ENCODE measurements at regions of chr6 and their contacts with region 1.

Region 1: DNA sequence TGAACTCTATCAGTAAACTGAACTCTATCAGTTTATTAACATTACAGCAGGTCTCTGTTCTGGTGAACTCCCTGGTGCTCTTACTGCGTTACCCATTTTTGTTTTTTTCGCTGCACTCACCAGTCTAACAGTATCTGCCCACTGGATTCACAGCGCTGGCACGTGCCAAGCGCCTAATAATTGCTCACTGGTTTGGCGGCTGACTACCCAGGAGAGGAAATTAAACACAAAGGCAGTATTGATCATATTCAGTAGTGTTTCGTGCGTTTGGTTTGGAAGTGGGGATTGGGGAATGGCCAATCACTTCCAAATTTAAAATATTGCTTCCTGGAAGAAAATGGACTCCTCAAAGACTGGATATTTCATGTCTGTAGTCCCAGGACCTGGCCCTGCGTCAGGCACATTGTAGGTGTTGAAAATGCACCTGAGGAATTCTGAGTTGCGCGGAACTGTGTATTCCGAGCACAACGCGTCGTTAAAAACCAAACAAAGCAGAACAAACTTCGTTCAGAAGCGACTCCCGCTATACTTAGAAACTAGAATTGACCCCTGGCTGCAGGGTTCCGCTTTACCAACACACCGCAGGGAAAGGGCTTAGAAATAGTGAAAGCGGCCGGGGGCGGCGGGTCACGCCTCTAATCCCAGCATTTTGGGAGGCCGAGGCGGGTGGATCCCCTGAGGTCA is 1.1 kb upstream of the RPS12 start:
- DNase-seq: peak; percentile 68
- H3K4me3 Mint-ChIP-seq: peak overlapping the region; percentile 97
- H3K27ac Mint-ChIP-seq: peak overlapping the region; percentile 98
- H3K4me1 Mint-ChIP-seq: peaks cover 28% of the 10 kb centered on the region
- H3K27me3 Mint-ChIP-seq: peaks cover 2% of the 10 kb centered on the region

Region 2: GRCh38 chr6:131914967-131915751 is 898.2 kb before region 1 on chr6:
- CTCF ChIA-PET with region 1: no interaction called
- POLR2A ChIA-PET with region 1: no interaction called
- intact Hi-C with region 1: loop called (anchors 5 kb)
- DNase-seq: peak; percentile 61
- H3K4me3 Mint-ChIP-seq: no peak overlapping the region
- H3K27ac Mint-ChIP-seq: no peak overlapping the region
- H3K4me1 Mint-ChIP-seq: peaks cover 13% of the 10 kb centered on the region
- H3K27me3 Mint-ChIP-seq: peaks cover 43% of the 10 kb centered on the region

Region 3: DNA sequence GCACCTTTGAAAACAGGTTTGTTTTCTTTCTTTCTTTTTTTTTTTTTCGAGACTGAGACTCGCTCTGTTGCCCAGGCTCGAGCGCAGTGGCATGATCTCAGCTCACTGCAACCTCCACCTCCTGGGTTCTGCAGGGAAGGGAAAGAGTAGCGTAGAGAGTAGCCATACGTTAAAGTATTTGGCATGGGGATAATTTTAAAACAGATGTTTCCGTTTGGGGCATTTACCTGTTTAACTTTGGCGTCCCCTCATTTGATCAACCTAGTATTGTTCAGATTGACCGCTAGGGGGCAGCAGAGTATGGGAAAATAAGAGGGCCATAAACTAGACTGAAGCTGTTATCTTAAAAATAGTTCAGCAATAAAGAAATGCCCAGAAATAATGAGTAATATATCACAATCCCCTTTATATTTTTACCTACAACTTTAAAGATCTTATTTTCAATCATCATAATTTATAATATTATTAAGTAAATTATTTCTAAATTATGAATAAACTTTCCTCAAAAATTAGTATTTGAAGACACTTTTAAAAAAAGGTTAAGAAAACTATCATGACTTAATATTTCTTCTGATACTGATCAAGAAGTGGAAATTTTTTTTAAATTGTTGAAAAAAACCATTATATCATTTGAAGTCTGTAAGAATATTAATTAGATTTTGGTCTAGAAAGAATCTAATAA is 282.9 kb before region 1 on chr6:
- CTCF ChIA-PET with region 1: no interaction called
- POLR2A ChIA-PET with region 1: no interaction called
- intact Hi-C with region 1: loop called (anchors 5 kb)
- DNase-seq: peak; percentile 69
- H3K4me3 Mint-ChIP-seq: no peak overlapping the region
- H3K27ac Mint-ChIP-seq: no peak overlapping the region
- H3K4me1 Mint-ChIP-seq: no peaks in the 10 kb centered on the region
- H3K27me3 Mint-ChIP-seq: peaks cover 7% of the 10 kb centered on the region

Region 4: GRCh38 chr6:132768051-132768517 is 45.2 kb before region 1 on chr6:
- CTCF ChIA-PET with region 1: no interaction called
- POLR2A ChIA-PET with region 1: interaction called, 4 read pairs
- intact Hi-C with region 1: loop called (anchors 2 kb)
- DNase-seq: peak; percentile 22
- H3K4me3 Mint-ChIP-seq: no peak overlapping the region
- H3K27ac Mint-ChIP-seq: no peak overlapping the region
- H3K4me1 Mint-ChIP-seq: peaks cover 15% of the 10 kb centered on the region
- H3K27me3 Mint-ChIP-seq: no peaks in the 10 kb centered on the region

Region 5: DNA sequence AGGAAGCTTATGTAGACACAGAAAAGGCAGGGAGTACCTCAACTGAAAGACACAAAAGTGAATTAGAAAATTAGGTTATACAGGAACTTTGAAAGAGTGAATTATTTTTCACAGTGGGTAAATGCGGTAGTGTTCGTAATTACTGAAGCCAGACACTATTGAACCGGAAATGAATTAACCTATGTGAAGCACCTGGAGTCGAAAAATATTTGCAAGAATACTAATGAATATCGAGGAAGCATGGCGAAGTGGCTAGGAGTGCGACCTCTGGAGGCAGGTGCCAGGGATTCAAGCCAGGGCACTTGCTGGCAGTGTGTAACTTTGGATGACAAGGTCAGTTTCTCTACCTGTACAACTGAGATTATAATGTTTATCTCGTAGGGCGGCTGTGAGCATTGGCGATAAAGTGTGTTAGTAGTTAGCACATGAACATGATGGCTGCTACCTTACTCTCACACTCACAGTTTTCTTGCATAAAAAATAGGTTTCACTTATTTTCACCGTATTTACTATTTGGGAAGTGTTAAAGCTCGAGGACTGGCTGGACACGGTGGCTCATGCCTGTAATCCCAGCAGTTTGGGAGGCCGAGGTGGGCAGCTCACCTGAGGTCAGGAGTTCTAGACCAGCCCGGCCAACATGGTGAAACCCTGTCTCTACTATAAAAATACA is 14.3 kb before region 1 on chr6:
- CTCF ChIA-PET with region 1: interaction called, 21 read pairs
- POLR2A ChIA-PET with region 1: interaction called, 76 read pairs
- intact Hi-C with region 1: loop called (anchors 1 kb)
- DNase-seq: peak; percentile 84
- H3K4me3 Mint-ChIP-seq: no peak overlapping the region
- H3K27ac Mint-ChIP-seq: no peak overlapping the region
- H3K4me1 Mint-ChIP-seq: peaks cover 19% of the 10 kb centered on the region
- H3K27me3 Mint-ChIP-seq: no peaks in the 10 kb centered on the region

Region 6: GRCh38 chr6:134621858-134622257 is 1808.5 kb after region 1 on chr6:
- CTCF ChIA-PET with region 1: no interaction called
- POLR2A ChIA-PET with region 1: no interaction called
- intact Hi-C with region 1: no loop called
- DNase-seq: no peak
- H3K4me3 Mint-ChIP-seq: no peak overlapping the region
- H3K27ac Mint-ChIP-seq: no peak overlapping the region
- H3K4me1 Mint-ChIP-seq: peaks cover 12% of the 10 kb centered on the region
- H3K27me3 Mint-ChIP-seq: no peaks in the 10 kb centered on the region

Measured in activated CD4-positive, alpha-beta memory T cell treated with anti-CD3 and anti-CD28 coated beads for 36 hours (primary cell).